ENCODE measurements at regions of chr5 and their contacts with region 1.

Region 1: DNA sequence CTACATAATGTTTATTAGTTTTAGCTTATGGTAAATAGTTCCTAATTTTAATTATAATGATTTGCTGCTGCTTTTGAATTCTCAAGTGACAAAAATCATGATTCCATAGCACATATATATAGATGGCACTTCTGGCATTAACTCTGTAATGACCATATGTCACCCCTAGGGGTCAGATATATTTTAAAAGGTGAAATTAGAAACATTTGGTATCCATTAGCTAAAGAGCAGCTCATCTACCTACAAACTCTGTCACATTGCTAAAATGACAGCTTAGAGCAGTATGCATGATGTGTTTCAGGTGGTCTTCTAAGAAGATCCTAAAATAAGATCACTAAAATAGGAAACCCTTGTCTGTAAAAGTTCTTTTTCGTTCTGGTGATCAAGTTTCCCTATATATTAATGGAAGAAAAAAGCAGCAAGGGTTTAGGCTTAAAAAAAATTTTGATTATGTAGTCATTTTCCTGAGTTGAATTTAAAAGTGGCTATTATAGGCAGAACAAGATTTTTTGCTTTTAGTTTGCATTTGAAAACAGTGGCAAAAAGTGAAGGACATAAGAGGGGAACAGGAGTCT is 157.7 kb upstream of the POU5F2 start:
- DNase-seq: no peak
- ATAC-seq: no peak
- H3K4me3 ChIP-seq: no peak overlapping the region
- H3K27ac ChIP-seq: no peak overlapping the region
- H3K4me1 ChIP-seq: no peaks in the 10 kb centered on the region
- H3K27me3 ChIP-seq: no peaks in the 10 kb centered on the region
- CTCF ChIP-seq: peak in 9 of 12 donors; percentile 10 to 51 (median 36)
- POLR2A ChIP-seq: no peak

Region 2: GRCh38 chr5:93909356-93909755 is 10.2 kb after region 1 on chr5:
- intact Hi-C with region 1: loop called in 1 of 10 experiments (anchors 1 kb)
- DNase-seq: no peak
- ATAC-seq: no peak
- H3K4me3 ChIP-seq: no peak overlapping the region
- H3K27ac ChIP-seq: no peak overlapping the region
- H3K4me1 ChIP-seq: no peaks in the 10 kb centered on the region
- H3K27me3 ChIP-seq: no peaks in the 10 kb centered on the region
- CTCF ChIP-seq: peak in 2 of 12 donors; percentile 10 to 15
- POLR2A ChIP-seq: no peak